ENCODE measurements at regions of chr6 and their contacts with region 1.

Region 1: DNA sequence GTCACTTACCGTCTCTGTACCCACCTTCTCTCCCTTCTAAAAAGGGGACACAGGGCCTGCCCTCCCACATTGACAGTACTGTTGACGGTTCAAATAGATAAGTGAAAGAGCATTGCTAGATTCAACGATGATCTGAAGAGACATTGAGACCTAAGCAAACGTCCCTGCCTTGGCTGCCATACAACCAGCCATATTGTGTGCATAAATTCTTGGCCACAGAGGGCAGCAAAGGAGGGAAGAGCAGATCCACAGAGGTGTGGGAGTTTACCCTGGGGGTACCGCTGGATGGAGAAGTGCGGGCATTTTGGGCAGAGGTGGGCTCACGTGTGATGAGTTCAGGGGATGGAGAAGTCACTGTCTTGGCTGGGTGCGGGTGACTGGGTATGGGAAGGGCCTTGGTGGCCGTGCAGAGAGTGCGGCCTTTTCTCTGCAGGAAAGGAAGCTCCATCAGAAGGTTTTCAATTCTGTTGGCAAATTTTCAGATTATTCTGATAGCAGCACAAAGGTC is 85.6 kb downstream of the POPDC3 start:
- DNase-seq: no peak
- H3K4me3 ChIP-seq: no peak overlapping the region
- H3K27ac ChIP-seq: no peak overlapping the region
- H3K4me1 ChIP-seq: no peaks in the 10 kb centered on the region
- H3K27me3 ChIP-seq: no peaks in the 10 kb centered on the region
- CTCF ChIP-seq: no peak
- POLR2A ChIP-seq: no peak

Region 2: DNA sequence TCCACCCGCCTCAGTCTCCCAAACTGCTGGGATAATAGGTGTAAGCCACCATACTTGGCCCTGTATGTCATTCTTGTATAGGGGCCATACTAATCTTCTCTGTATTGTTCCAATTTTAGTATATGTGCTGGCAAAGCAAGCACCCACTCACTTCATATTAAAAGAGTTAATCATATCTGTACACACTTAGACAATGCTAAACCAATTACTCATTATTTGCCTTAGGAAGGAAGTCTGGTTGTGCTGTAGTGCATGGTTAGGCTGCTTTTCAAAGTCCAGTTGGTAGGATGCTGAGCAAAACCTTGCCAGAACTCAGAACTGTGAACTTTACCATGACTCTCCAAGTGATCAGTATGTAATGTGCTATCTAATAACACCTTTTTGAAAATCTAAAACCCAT is 48.7 kb before region 1 on chr6:
- intact Hi-C with region 1: no loop called
- DNase-seq: no peak
- H3K4me3 ChIP-seq: no peak overlapping the region
- H3K27ac ChIP-seq: no peak overlapping the region
- H3K4me1 ChIP-seq: no peaks in the 10 kb centered on the region
- H3K27me3 ChIP-seq: no peaks in the 10 kb centered on the region
- CTCF ChIP-seq: no peak
- POLR2A ChIP-seq: no peak

Region 3: DNA sequence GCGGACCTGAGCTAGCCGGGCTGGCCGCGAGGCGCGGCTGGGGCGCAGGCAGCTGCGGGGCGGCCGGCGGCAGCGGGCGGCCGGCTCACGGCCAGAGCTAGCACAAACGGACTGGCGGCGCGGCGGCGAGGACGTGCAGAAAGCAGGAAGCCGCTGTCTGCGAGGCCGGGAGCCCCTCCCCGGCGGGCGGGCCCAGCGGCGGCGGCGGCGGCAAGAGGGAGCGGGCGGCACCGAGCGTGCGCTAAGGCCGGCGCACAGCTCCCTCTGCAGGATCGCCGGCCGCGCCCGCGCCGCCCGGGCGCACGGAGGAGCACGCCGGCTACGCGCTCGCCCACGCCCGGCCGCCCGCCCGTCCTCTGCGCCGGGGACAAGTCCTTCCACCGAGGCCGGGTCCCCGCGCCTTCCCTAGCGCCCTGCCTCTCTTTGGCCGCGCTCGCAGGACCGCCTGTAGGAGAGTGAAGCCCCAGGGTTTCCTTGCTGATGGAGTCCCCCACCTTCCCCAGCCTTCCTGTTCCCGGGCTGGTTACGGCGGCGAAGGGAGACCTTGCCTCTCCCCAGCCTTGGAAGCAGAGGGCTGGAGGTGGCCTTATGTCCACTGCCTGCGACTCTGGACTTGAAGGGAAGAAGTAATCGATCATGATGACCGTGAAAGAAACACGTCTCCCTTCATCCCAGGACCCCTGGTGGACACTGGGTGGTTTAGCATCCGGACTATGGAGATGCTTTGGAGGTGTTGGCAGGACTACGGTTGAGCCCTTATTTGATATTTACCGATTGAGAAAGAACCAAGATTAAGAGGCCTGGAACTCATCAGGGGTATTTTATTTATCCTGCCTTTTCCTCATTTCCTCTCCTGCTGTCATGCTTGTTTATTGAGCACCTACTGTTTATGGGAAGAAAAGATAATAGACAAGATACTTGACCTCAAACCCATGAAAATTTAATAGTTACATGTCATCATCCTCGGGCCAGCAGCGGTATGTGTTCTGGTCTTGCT is 309.1 kb after region 1 on chr6 and contains the start of gene PREP:
- intact Hi-C with region 1: loop called (anchors 10 kb)
- DNase-seq: peak; percentile 85 to 88
- H3K4me3 ChIP-seq: peak within 1 kb of the TSS; percentile 65 to 97 (median 91)
- H3K27ac ChIP-seq: peak within 1 kb of the TSS; percentile 79 to 83 (median 83)
- H3K4me1 ChIP-seq: peaks cover 13 to 32% of the 10 kb centered on the region in 2 donors
- H3K27me3 ChIP-seq: no peaks in the 10 kb centered on the region
- CTCF ChIP-seq: peak; percentile 27 to 83 (median 60)
- POLR2A ChIP-seq: peak in 1 of 2 donors; percentile 94
- total RNA-seq, gene PREP: 13.7 to 21.7 (median 16.6) TPM

Region 4: DNA sequence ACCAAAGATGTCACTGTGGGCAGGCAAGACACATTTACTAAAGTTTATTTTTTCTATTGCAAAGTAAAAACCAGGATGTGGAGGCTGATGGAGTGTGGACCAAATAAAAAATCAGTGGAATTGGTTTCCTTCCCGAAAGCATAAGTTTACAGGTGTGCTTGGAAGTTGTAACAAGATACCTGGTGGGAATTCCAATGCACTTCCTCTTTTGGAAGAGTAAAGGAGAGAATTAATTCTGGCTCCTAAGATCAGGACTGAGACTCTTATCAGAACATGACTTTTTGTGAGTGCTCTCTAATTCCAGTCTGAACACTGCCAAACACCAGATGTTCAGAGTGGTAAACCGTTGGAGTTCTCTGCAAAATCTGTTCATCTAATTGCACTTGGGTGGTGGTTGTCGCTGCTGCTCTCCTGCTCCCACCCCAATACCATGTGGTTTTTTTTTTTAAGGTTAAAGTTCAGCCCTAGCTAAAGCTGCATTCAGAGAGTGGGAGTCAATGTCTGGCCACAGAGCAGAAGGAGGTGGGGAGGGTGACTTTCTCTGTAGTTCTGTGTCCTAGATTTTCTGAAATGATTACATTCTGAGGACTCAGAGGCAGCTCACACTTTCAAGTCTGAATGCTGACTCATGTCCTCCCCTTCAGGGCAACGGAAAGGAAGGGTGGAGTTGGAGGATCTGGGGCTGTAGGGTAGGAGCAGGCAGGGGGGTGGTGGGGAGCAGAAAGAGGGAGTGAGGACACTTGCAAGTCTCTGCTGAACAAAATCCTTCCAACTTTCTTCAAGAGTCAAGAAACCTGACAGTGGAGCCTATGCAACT is 716.1 kb after region 1 on chr6:
- intact Hi-C with region 1: no loop called
- DNase-seq: peak; percentile 37 to 40
- H3K4me3 ChIP-seq: no peak overlapping the region
- H3K27ac ChIP-seq: no peak overlapping the region
- H3K4me1 ChIP-seq: peaks cover 11 to 32% of the 10 kb centered on the region in 2 donors
- H3K27me3 ChIP-seq: no peaks in the 10 kb centered on the region
- CTCF ChIP-seq: no peak
- POLR2A ChIP-seq: no peak

Measured in thyroid gland (tissue), 4 donors.